GM12878 (cell line): ENCODE measurements at regions of chr4 and their contacts with region 1.

Region 1: DNA sequence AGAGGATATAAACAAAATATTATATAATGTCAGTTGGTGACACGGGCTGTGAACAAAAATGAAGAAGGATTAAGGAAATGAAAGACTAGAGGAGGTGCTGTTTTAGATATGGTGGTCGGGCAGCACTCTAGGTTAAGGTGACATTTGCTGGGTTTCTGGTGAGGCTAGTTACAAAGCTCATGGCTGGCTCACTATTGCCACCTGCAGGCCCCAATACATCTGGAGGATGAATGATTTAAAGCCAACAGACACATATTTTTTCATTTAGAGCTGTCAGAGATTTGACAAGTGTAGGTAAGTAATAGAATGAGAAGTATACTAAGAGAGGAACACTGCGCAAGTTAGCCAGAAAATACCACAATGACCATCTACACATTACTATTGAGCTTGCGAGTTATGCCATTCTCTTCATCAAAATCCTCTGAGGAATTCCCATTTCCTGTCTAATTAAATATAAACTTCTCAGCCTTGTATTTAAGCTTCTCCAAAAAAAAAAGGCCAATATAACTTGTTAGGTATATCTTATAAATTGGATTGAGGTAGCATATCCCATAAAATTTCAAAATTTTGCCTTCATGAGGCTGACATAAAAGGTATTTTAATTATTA is 6.4 kb upstream of the FGG start:
- DNase-seq: peak; percentile 21
- ATAC-seq: peak; percentile 88
- H3K4me3 ChIP-seq: no peak overlapping the region
- H3K27ac ChIP-seq: no peak overlapping the region
- H3K4me1 ChIP-seq: peaks cover 13% of the 10 kb centered on the region
- H3K27me3 ChIP-seq: no peaks in the 10 kb centered on the region
- CTCF ChIP-seq: peak; percentile 68 to 82 (median 69)
- EP300 ChIP-seq: no peak
- POLR2A ChIP-seq: no peak
- RAD21 ChIP-seq: peak; percentile 63

Region 2: GRCh38 chr4:154551872-154552686 is 66.7 kb before region 1 on chr4:
- CTCF ChIA-PET with region 1: interaction called, 796 read pairs
- POLR2A ChIA-PET with region 1: interaction called, 9 read pairs
- RAD21 ChIA-PET with region 1: interaction called, 44 read pairs
- SMC1A ChIA-PET with region 1: interaction called, 119 read pairs
- in situ Hi-C with region 1: loop called (anchors 5 kb)
- intact Hi-C with region 1: loop called (anchors 1 kb)
- DNase-seq: peak; percentile 28
- ATAC-seq: peak; percentile 64
- H3K4me3 ChIP-seq: no peak overlapping the region
- H3K27ac ChIP-seq: no peak overlapping the region
- H3K4me1 ChIP-seq: peaks cover 3% of the 10 kb centered on the region; the same call in 1 of the 2 replicates
- H3K27me3 ChIP-seq: no peaks in the 10 kb centered on the region
- CTCF ChIP-seq: peak; percentile 79 to 82 (median 79)
- EP300 ChIP-seq: no peak
- POLR2A ChIP-seq: no peak
- RAD21 ChIP-seq: peak; percentile 94

Region 3: GRCh38 chr4:154566639-154567204 is 52.1 kb before region 1 on chr4:
- CTCF ChIA-PET with region 1: interaction called, 796 read pairs
- POLR2A ChIA-PET with region 1: no interaction called
- RAD21 ChIA-PET with region 1: interaction called, 15 read pairs
- SMC1A ChIA-PET with region 1: interaction called, 112 read pairs
- in situ Hi-C with region 1: no loop called
- intact Hi-C with region 1: no loop called
- DNase-seq: no peak
- ATAC-seq: no peak
- H3K4me3 ChIP-seq: no peak overlapping the region
- H3K27ac ChIP-seq: no peak overlapping the region
- H3K4me1 ChIP-seq: no peaks in the 10 kb centered on the region
- H3K27me3 ChIP-seq: no peaks in the 10 kb centered on the region; a peak in 1 of 4 replicates
- CTCF ChIP-seq: no peak
- EP300 ChIP-seq: no peak
- POLR2A ChIP-seq: no peak
- RAD21 ChIP-seq: no peak

Region 4: GRCh38 chr4:154634058-154634457 is 15.2 kb after region 1 on chr4:
- CTCF ChIA-PET with region 1: interaction called, 11 read pairs
- POLR2A ChIA-PET with region 1: no interaction called
- RAD21 ChIA-PET with region 1: interaction called, 4 read pairs
- SMC1A ChIA-PET with region 1: interaction called, 7 read pairs
- in situ Hi-C with region 1: no loop called
- intact Hi-C with region 1: no loop called
- DNase-seq: no peak
- ATAC-seq: peak; percentile 48
- H3K4me3 ChIP-seq: no peak overlapping the region
- H3K27ac ChIP-seq: no peak overlapping the region
- H3K4me1 ChIP-seq: no peaks in the 10 kb centered on the region
- H3K27me3 ChIP-seq: no peaks in the 10 kb centered on the region
- CTCF ChIP-seq: no peak
- EP300 ChIP-seq: no peak
- POLR2A ChIP-seq: no peak
- RAD21 ChIP-seq: no peak